PC-3 (cell line): ENCODE measurements at regions of chr5 and their contacts with region 1.

Region 1: DNA sequence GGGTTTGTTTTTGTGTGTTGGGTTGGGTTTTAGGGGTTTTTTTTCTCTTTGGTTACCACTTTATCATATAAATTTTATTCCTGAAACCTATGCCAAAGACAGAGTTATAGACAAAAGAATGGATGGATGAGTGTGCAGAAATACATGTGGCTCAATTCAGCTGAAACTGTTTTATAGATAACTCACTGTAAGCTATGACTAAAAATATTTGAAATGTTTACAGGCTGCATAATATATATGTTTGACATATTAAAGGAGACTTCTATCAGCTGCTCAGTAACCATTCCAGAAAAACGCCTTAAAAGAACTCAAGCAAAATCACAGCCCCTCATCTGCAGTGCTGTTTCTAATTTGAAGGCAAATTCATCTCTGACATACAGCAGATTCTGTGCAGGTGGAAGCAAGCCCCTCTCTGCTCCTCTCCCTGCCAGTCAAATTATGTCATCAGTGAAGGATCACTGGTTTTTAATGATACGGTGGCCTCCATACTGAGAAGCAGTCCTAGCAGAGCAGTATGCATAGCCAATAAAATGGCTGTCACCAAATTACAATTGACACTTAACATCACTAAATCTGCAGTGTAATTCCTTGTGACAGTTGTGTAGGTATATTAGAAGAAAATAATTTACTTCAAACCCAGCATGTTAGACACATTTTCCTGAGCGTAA is 301.6 kb downstream of the NR2F1-AS1 start:
- DNase-seq: peak; percentile 64
- ATAC-seq: peak; percentile 74
- H3K4me3 ChIP-seq: peak overlapping the region; percentile 18; the same call in 1 of the 2 replicates
- H3K27ac ChIP-seq: peak overlapping the region; percentile 82
- H3K4me1 ChIP-seq: peaks cover 50% of the 10 kb centered on the region
- H3K27me3 ChIP-seq: no peaks in the 10 kb centered on the region
- CTCF ChIP-seq: no peak

Region 2: DNA sequence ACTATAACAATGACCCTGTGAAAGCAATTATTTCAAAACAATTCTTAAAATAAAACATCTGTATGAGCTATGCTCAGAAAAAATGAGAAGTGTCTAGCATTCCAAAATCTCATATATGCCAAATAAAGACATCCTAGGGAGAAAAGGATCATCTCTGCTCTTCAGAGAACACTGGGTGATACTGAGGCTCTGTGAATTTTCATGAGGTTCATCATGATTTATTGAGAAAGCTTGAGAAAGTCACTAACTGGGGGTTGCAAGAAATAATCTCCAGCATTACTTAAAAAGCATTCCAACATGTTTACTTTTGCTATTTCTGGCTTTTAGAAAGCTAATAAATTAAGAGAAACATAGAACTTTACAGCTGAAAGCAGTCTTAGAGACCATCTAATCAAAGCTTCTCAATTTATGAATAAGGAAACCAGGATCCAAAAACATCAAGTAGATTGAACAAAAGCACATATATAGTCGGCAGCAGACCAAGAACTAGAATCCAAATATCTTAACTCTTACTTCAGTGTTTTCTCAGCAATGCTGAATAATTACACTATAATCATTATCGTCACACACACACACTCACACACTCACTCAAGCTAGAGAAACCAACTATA is 71.2 kb before region 1 on chr5:
- CTCF ChIA-PET with region 1: no interaction called
- POLR2A ChIA-PET with region 1: no interaction called
- intact Hi-C with region 1: no loop called
- DNase-seq: no peak
- ATAC-seq: no peak
- H3K4me3 ChIP-seq: no peak overlapping the region
- H3K27ac ChIP-seq: no peak overlapping the region
- H3K4me1 ChIP-seq: no peaks in the 10 kb centered on the region
- H3K27me3 ChIP-seq: no peaks in the 10 kb centered on the region
- CTCF ChIP-seq: no peak

Region 3: DNA sequence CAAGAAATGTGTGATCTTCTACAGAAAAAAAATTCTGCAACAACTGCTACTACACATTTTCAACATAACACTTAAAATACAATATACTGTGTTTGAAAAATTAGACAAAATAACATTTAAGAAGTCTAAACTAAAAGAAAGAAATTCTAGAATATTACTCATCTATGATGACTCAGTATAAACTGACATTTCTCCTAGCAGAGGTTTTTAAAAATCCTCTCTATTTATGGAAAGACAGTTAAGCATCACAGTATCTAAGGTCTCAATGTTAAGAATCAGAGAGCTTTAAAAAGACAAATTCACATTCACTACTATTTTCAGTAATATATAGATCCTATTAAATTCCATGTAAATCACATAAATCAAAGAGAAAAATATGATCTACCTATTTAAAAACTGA is 240.3 kb after region 1 on chr5:
- CTCF ChIA-PET with region 1: no interaction called
- POLR2A ChIA-PET with region 1: no interaction called
- intact Hi-C with region 1: no loop called
- DNase-seq: peak; percentile 32
- ATAC-seq: peak; percentile 71
- H3K4me3 ChIP-seq: no peak overlapping the region
- H3K27ac ChIP-seq: peak overlapping the region; percentile 7; the same call in 1 of the 2 replicates
- H3K4me1 ChIP-seq: peaks cover 20% of the 10 kb centered on the region
- H3K27me3 ChIP-seq: no peaks in the 10 kb centered on the region
- CTCF ChIP-seq: no peak

Region 4: GRCh38 chr5:93545872-93546271 is 266.4 kb after region 1 on chr5:
- CTCF ChIA-PET with region 1: no interaction called
- POLR2A ChIA-PET with region 1: interaction called, 10 read pairs
- intact Hi-C with region 1: no loop called
- DNase-seq: no peak
- ATAC-seq: no peak
- H3K4me3 ChIP-seq: no peak overlapping the region
- H3K27ac ChIP-seq: no peak overlapping the region
- H3K4me1 ChIP-seq: no peaks in the 10 kb centered on the region
- H3K27me3 ChIP-seq: no peaks in the 10 kb centered on the region
- CTCF ChIP-seq: no peak